SK-N-SH (cell line): ENCODE measurements at regions of chr3 and their contacts with region 1.

Region 1: GRCh38 chr3:65425880-65426279 is 612.8 kb downstream of the MAGI1 start:
- DNase-seq: peak; percentile 29
- H3K4me3 ChIP-seq: no peak overlapping the region
- H3K27ac ChIP-seq: no peak overlapping the region
- H3K4me1 ChIP-seq: peaks cover 0 to 2% of the 10 kb centered on the region in 2 experiments; a peak in 1 of 4 replicates
- H3K27me3 ChIP-seq: no peaks in the 10 kb centered on the region
- CTCF ChIP-seq: peak; percentile 58
- EP300 ChIP-seq: no peak
- RAD21 ChIP-seq: peak; percentile 56

Region 2: DNA sequence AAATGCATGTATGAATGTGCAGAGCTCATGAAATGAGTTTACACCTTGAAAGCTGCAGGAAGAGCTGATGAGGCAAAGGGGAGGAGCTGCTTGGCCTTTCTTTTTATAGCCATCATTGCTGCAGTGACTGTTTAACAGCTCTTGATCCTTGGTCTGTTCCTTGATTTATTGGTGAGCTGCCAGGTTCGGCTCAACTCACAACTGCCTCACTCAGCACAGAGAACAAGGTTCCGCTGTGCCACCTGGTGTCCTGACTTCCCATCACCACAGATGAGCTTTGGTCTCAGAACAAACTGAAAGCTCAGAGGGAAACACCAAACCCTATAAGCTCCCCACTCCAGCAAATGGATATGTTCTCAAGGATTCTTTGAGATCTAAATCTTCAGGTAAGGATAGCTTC is 13.3 kb before region 1 on chr3:
- CTCF ChIA-PET with region 1: interaction called, 21 read pairs
- POLR2A ChIA-PET with region 1: no interaction called
- DNase-seq: no peak
- H3K4me3 ChIP-seq: no peak overlapping the region
- H3K27ac ChIP-seq: peak overlapping the region in 1 of 2 experiments; percentile 25; a peak in 1 of 4 replicates
- H3K4me1 ChIP-seq: peaks cover 0 to 4% of the 10 kb centered on the region in 2 experiments; a peak in 1 of 4 replicates
- H3K27me3 ChIP-seq: no peaks in the 10 kb centered on the region
- CTCF ChIP-seq: no peak
- EP300 ChIP-seq: no peak
- RAD21 ChIP-seq: peak; percentile 63